Endothelial cell of umbilical vein (primary cell): ENCODE measurements at regions of chr4 and their contacts with region 1.

Region 1: DNA sequence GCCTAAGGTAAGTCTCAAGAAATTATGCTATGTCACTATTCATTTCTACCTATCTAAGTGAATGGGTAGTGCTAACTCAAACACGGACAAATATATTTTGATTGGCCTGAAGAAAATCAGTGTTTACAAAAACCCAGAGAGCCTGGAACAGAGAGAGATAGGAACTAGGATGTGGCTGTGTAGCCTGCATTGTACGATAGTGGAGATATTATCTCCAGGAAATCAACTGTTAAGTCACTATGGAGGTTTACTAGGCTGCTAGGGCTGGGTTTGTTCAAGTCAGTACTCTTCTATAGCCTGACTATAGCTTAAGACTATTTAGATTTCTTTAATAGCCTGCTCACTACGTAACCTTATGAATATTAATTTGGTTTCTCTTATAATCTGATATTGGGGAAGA is 127.9 kb downstream of the TACR3 start:
- DNase-seq: peak; percentile 87
- H3K4me3 ChIP-seq: peak overlapping the region in 1 of 3 experiments; percentile 28
- H3K27ac ChIP-seq: peak overlapping the region; percentile 18
- H3K4me1 ChIP-seq: peaks cover 15% of the 10 kb centered on the region
- H3K27me3 ChIP-seq: no peaks in the 10 kb centered on the region
- CTCF ChIP-seq: no peak
- POLR2A ChIP-seq: no peak

Region 2: DNA sequence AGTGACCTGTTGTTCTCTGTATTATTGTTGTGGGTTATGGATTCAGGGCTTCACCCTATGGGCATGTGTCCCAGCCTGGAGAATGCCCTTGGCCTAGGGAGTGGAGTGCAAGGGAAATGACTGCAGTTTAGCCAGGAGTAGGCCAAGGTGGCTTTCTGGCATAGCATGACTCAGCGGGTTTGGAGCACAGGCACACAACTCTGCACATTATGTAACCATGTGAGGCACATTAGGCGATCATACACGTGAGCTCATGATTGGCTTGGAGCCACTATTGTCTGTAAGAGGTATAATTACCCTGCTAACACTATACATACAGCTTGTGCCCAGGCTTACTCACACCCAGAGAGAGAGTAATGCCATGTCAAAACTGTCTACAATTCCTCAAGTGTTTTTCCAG is 163.0 kb after region 1 on chr4:
- CTCF ChIA-PET with region 1: no interaction called
- POLR2A ChIA-PET with region 1: no interaction called
- dilution Hi-C with region 1: no loop called
- intact Hi-C with region 1: loop called (anchors 2 kb)
- DNase-seq: peak; percentile 87
- H3K4me3 ChIP-seq: no peak overlapping the region
- H3K27ac ChIP-seq: peak overlapping the region; percentile 52
- H3K4me1 ChIP-seq: peaks cover 9% of the 10 kb centered on the region
- H3K27me3 ChIP-seq: no peaks in the 10 kb centered on the region
- CTCF ChIP-seq: no peak
- POLR2A ChIP-seq: no peak